Naive thymus-derived CD4-positive, alpha-beta T cell (primary cell): ENCODE measurements at regions of chr10 and their contacts with region 1.

Region 1: GRCh38 chr10:101693978-101694673 is 844 bp downstream of the FBXW4 start:
- DNase-seq: peak; percentile 60 to 81 (median 73)
- ATAC-seq: peak; percentile 77
- H3K4me3 ChIP-seq: peak overlapping the region; percentile 57
- H3K4me3 Mint-ChIP-seq: peak overlapping the region; percentile 93 to 98 (median 96)
- H3K27ac ChIP-seq: peak overlapping the region; percentile 99
- H3K27ac Mint-ChIP-seq: peak overlapping the region; percentile 94 to 100 (median 99)
- H3K4me1 ChIP-seq: peaks cover 21 to 28% of the 10 kb centered on the region in 2 donors
- H3K4me1 Mint-ChIP-seq: peaks cover 33 to 59% (median 45%) of the 10 kb centered on the region in 7 donors
- H3K27me3 ChIP-seq: no peaks in the 10 kb centered on the region
- H3K27me3 Mint-ChIP-seq: no peaks in the 10 kb centered on the region

Region 2: GRCh38 chr10:101587725-101588653 is 106.1 kb before region 1 on chr10 and contains the starts of genes DPCD and POLL:
- CTCF ChIA-PET with region 1: no interaction called
- POLR2A ChIA-PET with region 1: interaction called, 3 read pairs
- intact Hi-C with region 1: loop called in 1 of 2 experiments (anchors 1 kb)
- DNase-seq: peak; percentile 73 to 89 (median 81)
- ATAC-seq: peak; percentile 94
- H3K4me3 ChIP-seq: peak within 1 kb of the TSS; percentile 77
- H3K4me3 Mint-ChIP-seq: peak within 1 kb of the TSS; percentile 92 to 97 (median 95)
- H3K27ac ChIP-seq: peak within 1 kb of the TSS; percentile 69
- H3K27ac Mint-ChIP-seq: peak within 1 kb of the TSS; percentile 71 to 94 (median 89)
- H3K4me1 ChIP-seq: peaks cover 14 to 16% of the 10 kb centered on the region in 2 donors
- H3K4me1 Mint-ChIP-seq: peaks cover 16 to 37% (median 32%) of the 10 kb centered on the region in 7 donors
- H3K27me3 ChIP-seq: no peaks in the 10 kb centered on the region
- H3K27me3 Mint-ChIP-seq: no peaks in the 10 kb centered on the region
- total RNA-seq, gene DPCD: 0.64 to 3.6 (median 1.3) TPM
- total RNA-seq, gene POLL: 34.9 to 65.8 (median 38.8) TPM

Region 3: DNA sequence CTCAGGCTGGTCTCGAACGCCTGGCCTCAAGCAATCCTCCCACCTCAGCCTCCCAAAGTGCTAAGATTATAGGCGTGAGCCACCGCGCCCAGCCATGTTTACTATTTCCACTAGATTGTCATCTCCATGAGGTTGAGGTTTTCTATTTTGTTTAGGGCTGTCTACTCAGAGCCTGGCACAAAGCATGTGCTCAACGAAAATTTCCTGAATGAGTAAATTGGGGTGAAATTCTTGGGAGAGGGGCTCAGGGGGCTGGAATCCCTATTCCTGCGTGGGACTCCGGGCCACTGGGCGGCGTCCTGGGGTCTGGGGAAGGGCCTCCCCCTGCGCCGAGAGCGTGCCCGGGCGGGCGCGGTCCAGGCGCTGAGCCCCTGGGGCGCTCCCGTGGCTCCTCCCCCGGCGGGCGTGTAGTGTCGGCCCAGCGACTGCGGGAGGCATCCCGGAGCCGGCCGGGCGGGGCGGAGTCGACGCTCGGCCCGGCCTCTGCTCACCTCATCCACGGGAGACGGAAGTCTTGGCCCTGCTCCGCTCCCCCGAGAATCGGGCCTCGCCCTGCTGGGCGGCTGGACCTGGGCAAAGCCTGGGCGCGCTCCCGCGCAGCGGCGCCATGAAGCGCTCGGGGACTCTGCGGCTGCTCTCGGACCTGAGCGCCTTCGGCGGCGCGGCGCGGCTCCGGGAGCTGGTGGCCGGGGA is 370.9 kb after region 1 on chr10 and contains the start of gene HPS6:
- CTCF ChIA-PET with region 1: no interaction called
- POLR2A ChIA-PET with region 1: interaction called, 3 read pairs
- intact Hi-C with region 1: loop called in 1 of 2 experiments (anchors 5 kb)
- DNase-seq: peak; percentile 73 to 94 (median 81)
- ATAC-seq: peak; percentile 98
- H3K4me3 ChIP-seq: peak within 1 kb of the TSS; percentile 82
- H3K4me3 Mint-ChIP-seq: peak within 1 kb of the TSS; percentile 79 to 91 (median 89)
- H3K27ac ChIP-seq: peak within 1 kb of the TSS; percentile 93
- H3K27ac Mint-ChIP-seq: peak within 1 kb of the TSS; percentile 85 to 97 (median 93)
- H3K4me1 ChIP-seq: peaks cover 14 to 23% of the 10 kb centered on the region in 2 donors
- H3K4me1 Mint-ChIP-seq: peaks cover 23 to 43% (median 36%) of the 10 kb centered on the region in 7 donors
- H3K27me3 ChIP-seq: no peaks in the 10 kb centered on the region
- H3K27me3 Mint-ChIP-seq: no peaks in the 10 kb centered on the region
- total RNA-seq, gene HPS6: 12.1 to 24.2 (median 20.9) TPM

Region 4: DNA sequence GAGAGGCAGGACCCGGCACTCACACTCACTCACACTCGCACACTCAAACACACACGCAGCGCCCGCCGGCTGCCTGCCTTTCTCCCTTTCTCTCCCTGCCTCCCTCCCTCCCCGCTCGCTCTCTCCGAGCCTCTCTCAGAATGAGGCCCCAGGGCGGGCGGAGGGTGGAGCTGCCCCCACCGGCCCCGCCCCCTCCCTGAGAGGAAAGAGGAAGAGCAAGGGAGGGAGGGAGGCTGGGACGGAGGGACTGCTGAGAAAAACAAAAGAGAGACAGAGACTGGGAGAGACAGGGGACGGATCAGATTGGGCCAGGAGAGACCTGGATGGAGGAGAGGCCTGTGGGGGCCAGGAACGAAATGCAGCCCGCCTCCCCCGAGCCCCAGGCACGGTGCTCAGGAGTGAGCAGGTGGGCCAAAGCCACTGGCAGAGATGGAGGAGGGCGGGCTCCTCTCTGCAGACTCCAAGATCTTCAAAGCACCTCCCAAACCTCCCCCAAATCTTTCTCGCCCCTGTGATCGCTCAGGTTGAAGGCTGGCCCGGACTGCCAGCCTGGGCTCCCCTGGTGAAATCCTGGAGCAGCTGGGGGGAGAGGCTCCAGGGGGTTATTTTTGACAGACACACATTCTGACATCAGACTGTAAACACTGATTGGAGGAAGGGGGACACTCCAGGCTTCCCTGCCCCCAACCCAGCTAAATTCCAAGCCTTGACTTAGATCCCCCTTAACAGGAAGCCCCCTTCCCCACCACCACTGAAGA is 420.9 kb after region 1 on chr10:
- CTCF ChIA-PET with region 1: no interaction called
- POLR2A ChIA-PET with region 1: no interaction called
- intact Hi-C with region 1: loop called in 1 of 2 experiments (anchors 5 kb)
- DNase-seq: peak; percentile 61 to 83 (median 70)
- ATAC-seq: peak; percentile 86
- H3K4me3 ChIP-seq: peak overlapping the region; percentile 77
- H3K4me3 Mint-ChIP-seq: peak overlapping the region; percentile 84 to 97 (median 92)
- H3K27ac ChIP-seq: peak overlapping the region; percentile 97
- H3K27ac Mint-ChIP-seq: peak overlapping the region; percentile 80 to 98 (median 92)
- H3K4me1 ChIP-seq: peaks cover 49 to 58% of the 10 kb centered on the region in 2 donors
- H3K4me1 Mint-ChIP-seq: peaks cover 54 to 76% (median 67%) of the 10 kb centered on the region in 7 donors
- H3K27me3 ChIP-seq: no peaks in the 10 kb centered on the region
- H3K27me3 Mint-ChIP-seq: no peaks in the 10 kb centered on the region

Region 5: DNA sequence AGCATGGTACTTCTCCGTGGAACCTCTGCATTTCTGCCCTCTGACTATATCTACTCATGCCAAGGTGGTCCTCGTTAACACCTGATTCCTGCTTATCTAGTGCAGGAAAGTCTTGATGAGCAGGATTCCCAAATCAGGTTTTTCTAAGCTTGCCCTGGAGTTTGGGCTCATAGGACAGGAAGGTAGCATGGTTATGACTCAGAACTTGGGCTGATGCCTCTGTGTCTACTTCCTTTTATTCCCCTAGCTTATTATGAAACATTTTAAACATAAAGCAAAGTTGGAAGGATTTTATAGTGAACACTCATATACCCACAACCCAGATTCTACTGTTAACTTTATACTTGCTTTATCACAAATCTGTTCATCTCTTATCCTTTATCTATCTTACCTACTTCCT is 815.3 kb after region 1 on chr10:
- CTCF ChIA-PET with region 1: no interaction called
- POLR2A ChIA-PET with region 1: no interaction called
- intact Hi-C with region 1: loop called in 1 of 2 experiments (anchors 5 kb)
- DNase-seq: no peak
- ATAC-seq: peak; percentile 59
- H3K4me3 ChIP-seq: no peak overlapping the region
- H3K4me3 Mint-ChIP-seq: peak overlapping the region in 1 of 10 donors; percentile 25
- H3K27ac ChIP-seq: no peak overlapping the region
- H3K27ac Mint-ChIP-seq: peak overlapping the region in 1 of 9 donors; percentile 10
- H3K4me1 ChIP-seq: peaks cover 10 to 14% of the 10 kb centered on the region in 2 donors
- H3K4me1 Mint-ChIP-seq: peaks cover 23 to 52% (median 45%) of the 10 kb centered on the region in 7 donors
- H3K27me3 ChIP-seq: no peaks in the 10 kb centered on the region
- H3K27me3 Mint-ChIP-seq: no peaks in the 10 kb centered on the region